Activated B cell treated with CpG ODN at 0.5 μM for 24 hours (primary cell): ENCODE measurements at regions of chr3 and their contacts with region 1.

Region 1: GRCh38 chr3:99875929-99876841 is 58.5 kb downstream of the CMSS1 start:
- DNase-seq: peak; percentile 69
- ATAC-seq: peak; percentile 98
- H3K4me3 Mint-ChIP-seq: peak overlapping the region; percentile 81
- H3K27ac Mint-ChIP-seq: peak overlapping the region; percentile 39
- H3K4me1 Mint-ChIP-seq: peaks cover 26% of the 10 kb centered on the region
- H3K27me3 Mint-ChIP-seq: no peaks in the 10 kb centered on the region
- CTCF ChIP-seq: no peak

Region 2: DNA sequence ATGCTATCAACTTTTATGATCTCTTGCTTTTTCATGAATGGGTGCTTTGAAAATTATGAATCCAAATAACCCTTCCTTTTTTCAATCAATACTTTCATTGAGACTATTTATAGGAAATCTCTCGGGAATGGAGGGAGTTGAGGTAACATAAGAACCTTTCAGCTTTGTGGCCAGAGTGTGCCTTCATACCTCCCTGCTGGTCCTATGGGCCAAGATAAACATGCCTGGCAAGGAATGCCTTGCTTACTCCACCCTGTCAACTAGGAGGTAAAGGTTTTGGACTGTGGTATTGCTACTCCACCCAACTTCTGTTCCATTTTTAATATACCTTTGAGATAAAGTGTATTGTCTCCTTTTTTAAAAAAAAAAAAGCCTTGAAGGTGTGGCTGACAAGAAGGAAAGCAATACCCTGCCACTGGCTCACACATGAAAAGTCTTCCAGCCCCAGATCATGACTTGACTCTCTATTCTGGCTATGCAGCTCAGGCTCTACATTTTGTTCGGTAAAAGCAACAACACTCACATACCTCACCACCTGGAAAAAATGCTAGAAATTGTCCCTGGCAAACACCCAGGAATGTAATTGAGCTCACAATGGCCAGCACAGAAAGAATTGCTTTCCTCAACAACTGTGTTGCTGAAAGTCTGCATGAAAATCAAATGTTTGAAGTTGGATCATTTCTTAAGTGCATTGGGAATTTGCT is 201.9 kb before region 1 on chr3:
- CTCF ChIA-PET with region 1: no interaction called
- POLR2A ChIA-PET with region 1: no interaction called
- intact Hi-C with region 1: no loop called
- DNase-seq: no peak
- ATAC-seq: no peak
- H3K4me3 Mint-ChIP-seq: no peak overlapping the region
- H3K27ac Mint-ChIP-seq: no peak overlapping the region
- H3K4me1 Mint-ChIP-seq: no peaks in the 10 kb centered on the region
- H3K27me3 Mint-ChIP-seq: peaks cover 2% of the 10 kb centered on the region
- CTCF ChIP-seq: no peak

Region 3: DNA sequence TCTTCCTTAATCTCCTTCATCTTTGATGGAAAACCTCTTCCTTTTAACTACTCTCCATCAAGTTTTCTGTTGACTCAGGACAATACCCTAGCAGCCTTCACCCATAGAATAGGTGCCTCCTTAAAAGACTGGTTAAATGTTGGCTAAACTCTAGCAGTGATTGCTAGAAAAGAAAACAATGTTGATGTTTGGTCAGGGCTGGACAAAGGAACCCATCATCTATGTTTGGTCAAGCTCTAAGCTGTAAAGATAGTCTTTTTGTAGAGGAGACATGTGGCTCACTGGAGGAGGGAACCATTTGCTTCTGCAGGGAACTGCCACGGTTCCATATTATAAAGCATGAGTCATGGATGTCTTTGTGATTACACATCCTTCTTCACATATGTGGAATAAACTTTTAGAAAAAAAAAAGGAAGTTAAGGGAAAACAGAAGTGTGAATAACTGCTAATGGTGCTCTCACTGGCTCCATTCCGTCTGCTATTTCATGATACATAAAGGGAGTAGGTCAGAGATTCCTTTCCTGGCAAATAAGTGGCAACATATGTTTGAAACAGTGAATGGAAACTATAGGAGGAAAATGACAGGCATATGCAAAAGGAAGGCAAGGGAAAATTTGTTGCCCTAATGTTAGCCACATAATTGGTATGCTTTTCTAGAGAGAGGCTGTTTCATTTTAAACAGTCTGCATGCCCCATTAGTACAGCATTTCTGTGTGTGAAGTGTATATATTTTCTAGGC is 19.7 kb after region 1 on chr3:
- CTCF ChIA-PET with region 1: no interaction called
- POLR2A ChIA-PET with region 1: no interaction called
- intact Hi-C with region 1: no loop called
- DNase-seq: no peak
- ATAC-seq: peak; percentile 52
- H3K4me3 Mint-ChIP-seq: peak overlapping the region; percentile 12
- H3K27ac Mint-ChIP-seq: peak overlapping the region; percentile 18
- H3K4me1 Mint-ChIP-seq: peaks cover 19% of the 10 kb centered on the region
- H3K27me3 Mint-ChIP-seq: no peaks in the 10 kb centered on the region
- CTCF ChIP-seq: no peak

Region 4: GRCh38 chr3:99938270-99938911 is 62.2 kb after region 1 on chr3:
- CTCF ChIA-PET with region 1: no interaction called
- POLR2A ChIA-PET with region 1: interaction called, 4 read pairs
- intact Hi-C with region 1: loop called (anchors 1 kb)
- DNase-seq: no peak
- ATAC-seq: peak; percentile 31
- H3K4me3 Mint-ChIP-seq: peak overlapping the region; percentile 75
- H3K27ac Mint-ChIP-seq: peak overlapping the region; percentile 84
- H3K4me1 Mint-ChIP-seq: peaks cover 27% of the 10 kb centered on the region
- H3K27me3 Mint-ChIP-seq: no peaks in the 10 kb centered on the region
- CTCF ChIP-seq: no peak